ENCODE measurements at regions of chr17 and their contacts with region 1.

Region 1: DNA sequence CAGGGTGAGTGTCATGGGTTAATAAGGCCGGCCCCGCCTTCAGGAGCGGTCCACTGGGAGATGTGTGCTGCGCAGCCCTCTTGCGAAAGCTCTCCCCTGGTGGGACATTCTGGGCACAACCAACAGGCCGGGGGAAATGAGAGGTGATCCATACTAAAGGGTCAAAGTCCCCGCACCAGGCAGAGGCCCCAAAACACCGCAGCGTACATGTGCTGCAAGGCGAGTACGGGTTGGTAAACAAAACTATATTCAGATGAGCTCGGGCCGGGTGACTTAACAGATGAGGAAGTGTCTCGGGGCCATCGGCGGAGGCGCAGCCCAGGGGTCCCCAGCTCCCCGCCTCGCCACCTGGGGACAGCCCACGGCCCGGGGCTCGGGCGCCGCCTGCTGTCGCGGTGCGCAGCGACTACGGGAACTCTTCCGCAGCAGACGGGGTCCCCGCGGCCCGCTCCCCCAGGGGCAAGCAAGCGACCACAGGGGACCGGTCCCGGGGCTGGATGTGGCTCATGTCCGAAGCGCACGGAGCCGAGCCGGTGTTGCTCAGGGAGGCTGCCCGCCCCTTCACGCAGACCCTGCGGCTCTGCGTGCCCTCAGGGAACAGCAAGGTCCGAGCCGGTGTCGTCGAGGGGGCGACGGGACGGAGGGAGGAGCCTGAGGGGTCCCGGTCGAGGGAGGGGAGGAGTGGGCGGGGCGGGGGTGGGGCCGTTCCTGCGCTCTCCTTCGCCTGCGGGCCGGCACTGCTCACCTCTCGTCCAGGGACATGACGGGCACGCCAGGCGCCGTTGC is at the start of gene RAB37:
- DNase-seq: peak; percentile 79
- total RNA-seq, gene RAB37: 0.94 TPM

Region 2: DNA sequence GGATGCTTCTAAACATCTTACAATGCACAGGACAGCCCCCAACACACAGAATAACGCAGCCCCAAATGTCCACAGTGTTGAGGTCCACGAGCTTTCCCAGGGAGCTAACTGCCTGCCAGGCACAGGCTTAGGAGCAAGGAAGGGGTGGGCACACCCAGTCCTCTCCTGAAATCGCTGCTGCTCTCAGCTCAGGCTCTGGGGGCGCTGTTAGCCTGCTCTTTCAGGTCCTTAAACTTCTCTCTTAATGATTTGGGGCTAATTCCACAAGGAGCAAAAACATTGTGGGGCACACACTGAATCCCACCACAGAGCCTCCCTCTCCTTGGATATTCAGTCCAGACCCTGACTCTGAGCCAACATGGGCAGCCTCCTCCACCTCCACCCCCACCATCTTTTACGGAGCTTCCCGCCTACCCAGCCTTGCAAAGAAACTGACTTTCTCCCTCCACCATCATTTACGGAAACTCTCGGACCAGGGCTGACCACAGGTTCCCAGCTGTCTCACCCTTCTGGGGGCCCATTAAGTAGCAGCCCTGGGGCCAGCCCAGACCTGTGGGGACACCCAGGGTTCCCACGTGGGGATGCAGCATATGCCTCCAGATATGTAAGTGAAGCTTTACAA is 170.5 kb before region 1 on chr17:
- intact Hi-C with region 1: loop called (anchors 10 kb)
- DNase-seq: no peak

Region 3: GRCh38 chr17:74659898-74660297 is 76.8 kb before region 1 on chr17:
- intact Hi-C with region 1: loop called (anchors 5 kb)
- DNase-seq: no peak

Region 4: GRCh38 chr17:74892974-74893911 is 156.5 kb after region 1 on chr17 and contains the start of gene FADS6:
- intact Hi-C with region 1: no loop called
- DNase-seq: no peak
- total RNA-seq, gene FADS6: not detected